ENCODE measurements at regions of chr3 and their contacts with region 1.

Region 1: GRCh38 chr3:97282045-97282444 is 467.7 kb downstream of the EPHA6 start:
- DNase-seq: no peak
- H3K4me3 ChIP-seq: no peak overlapping the region
- H3K27ac ChIP-seq: no peak overlapping the region
- H3K4me1 ChIP-seq: no peaks in the 10 kb centered on the region
- H3K27me3 ChIP-seq: no peaks in the 10 kb centered on the region
- CTCF ChIP-seq: no peak

Region 2: GRCh38 chr3:96225494-96225893 is 1056.6 kb before region 1 on chr3:
- CTCF ChIA-PET with region 1: no interaction called
- POLR2A ChIA-PET with region 1: no interaction called
- intact Hi-C with region 1: no loop called
- DNase-seq: no peak
- H3K4me3 ChIP-seq: no peak overlapping the region
- H3K27ac ChIP-seq: no peak overlapping the region
- H3K4me1 ChIP-seq: no peaks in the 10 kb centered on the region
- H3K27me3 ChIP-seq: no peaks in the 10 kb centered on the region
- CTCF ChIP-seq: no peak

Region 3: GRCh38 chr3:97021778-97022177 is 260.3 kb before region 1 on chr3:
- CTCF ChIA-PET with region 1: no interaction called
- POLR2A ChIA-PET with region 1: no interaction called
- intact Hi-C with region 1: no loop called
- DNase-seq: no peak
- H3K4me3 ChIP-seq: no peak overlapping the region
- H3K27ac ChIP-seq: no peak overlapping the region
- H3K4me1 ChIP-seq: no peaks in the 10 kb centered on the region
- H3K27me3 ChIP-seq: no peaks in the 10 kb centered on the region
- CTCF ChIP-seq: no peak

Region 4: GRCh38 chr3:97245201-97245910 is 36.7 kb before region 1 on chr3:
- CTCF ChIA-PET with region 1: no interaction called
- POLR2A ChIA-PET with region 1: no interaction called
- intact Hi-C with region 1: loop called (anchors 5 kb)
- DNase-seq: no peak
- H3K4me3 ChIP-seq: no peak overlapping the region
- H3K27ac ChIP-seq: no peak overlapping the region
- H3K4me1 ChIP-seq: no peaks in the 10 kb centered on the region
- H3K27me3 ChIP-seq: no peaks in the 10 kb centered on the region
- CTCF ChIP-seq: no peak

Region 5: GRCh38 chr3:97515076-97515475 is 233.0 kb after region 1 on chr3:
- CTCF ChIA-PET with region 1: no interaction called
- POLR2A ChIA-PET with region 1: no interaction called
- intact Hi-C with region 1: no loop called
- DNase-seq: no peak
- H3K4me3 ChIP-seq: no peak overlapping the region
- H3K27ac ChIP-seq: no peak overlapping the region
- H3K4me1 ChIP-seq: no peaks in the 10 kb centered on the region
- H3K27me3 ChIP-seq: no peaks in the 10 kb centered on the region
- CTCF ChIP-seq: no peak